ENCODE measurements at regions of chr6 and their contacts with region 1.

Region 1: DNA sequence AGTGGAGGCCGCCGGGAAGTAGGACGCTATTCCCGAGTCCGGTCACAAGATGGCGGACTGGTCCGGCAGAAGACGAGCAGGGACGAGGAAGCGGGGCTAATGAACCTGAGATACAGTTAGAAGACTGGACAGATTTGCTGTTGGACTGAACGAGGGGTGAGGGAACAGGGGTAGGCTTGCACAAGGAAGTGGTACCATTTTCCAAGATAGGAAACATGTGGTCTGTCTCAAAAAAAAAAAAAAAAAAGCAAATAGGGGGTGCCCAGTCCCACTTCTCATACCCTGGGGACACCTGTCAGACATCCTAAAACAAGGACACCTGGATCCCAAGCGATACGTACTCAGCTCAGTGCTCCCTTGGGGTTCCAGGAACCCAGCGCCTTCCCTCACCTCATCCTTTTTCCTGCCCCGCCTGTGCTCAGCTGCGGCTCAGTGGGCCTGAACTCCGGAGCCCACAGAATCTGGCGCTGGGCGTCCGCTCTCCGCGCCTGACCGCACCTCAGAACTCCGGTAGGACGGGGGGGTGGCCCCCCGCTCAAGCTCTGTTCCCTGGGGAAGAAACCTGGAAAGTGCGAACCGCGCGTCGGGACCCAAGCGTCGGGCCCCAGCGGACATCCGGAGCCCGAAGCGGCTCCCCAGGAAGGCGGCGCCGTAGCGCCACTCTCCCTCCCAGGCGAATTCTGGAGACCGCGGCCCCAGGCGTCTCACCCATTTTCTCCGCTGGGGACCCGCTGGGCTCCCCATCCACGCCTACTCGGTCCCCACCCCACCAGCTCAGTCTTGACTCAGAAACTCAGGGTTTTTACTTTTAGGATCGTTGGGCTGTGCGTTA is at the start of gene LY6G5C:
- DNase-seq: peak; percentile 80
- ATAC-seq: peak; percentile 80
- H3K4me3 Mint-ChIP-seq: peak within 1 kb of the TSS; percentile 66
- H3K27ac Mint-ChIP-seq: peak within 1 kb of the TSS; percentile 49
- H3K4me1 Mint-ChIP-seq: peaks cover 15% of the 10 kb centered on the region
- H3K27me3 Mint-ChIP-seq: no peaks in the 10 kb centered on the region
- total RNA-seq, gene LY6G5C: 1.2 to 1.5 TPM

Region 2: GRCh38 chr6:31729515-31729978 is 48.5 kb after region 1 on chr6:
- CTCF ChIA-PET with region 1: no interaction called
- POLR2A ChIA-PET with region 1: no interaction called
- intact Hi-C with region 1: loop called in 1 of 2 experiments (anchors 2 kb)
- DNase-seq: peak; percentile 86
- ATAC-seq: peak; percentile 59
- H3K4me3 Mint-ChIP-seq: peak overlapping the region; percentile 69
- H3K27ac Mint-ChIP-seq: peak overlapping the region; percentile 5
- H3K4me1 Mint-ChIP-seq: peaks cover 65% of the 10 kb centered on the region
- H3K27me3 Mint-ChIP-seq: no peaks in the 10 kb centered on the region

Region 3: GRCh38 chr6:31769684-31770371 is 88.8 kb after region 1 on chr6:
- CTCF ChIA-PET with region 1: interaction called, 5 read pairs
- POLR2A ChIA-PET with region 1: no interaction called
- intact Hi-C with region 1: loop called in 1 of 2 experiments (anchors 1 kb)
- DNase-seq: peak; percentile 91
- ATAC-seq: peak; percentile 88
- H3K4me3 Mint-ChIP-seq: no peak overlapping the region
- H3K27ac Mint-ChIP-seq: peak overlapping the region; percentile 80
- H3K4me1 Mint-ChIP-seq: peaks cover 19% of the 10 kb centered on the region
- H3K27me3 Mint-ChIP-seq: no peaks in the 10 kb centered on the region

Region 4: DNA sequence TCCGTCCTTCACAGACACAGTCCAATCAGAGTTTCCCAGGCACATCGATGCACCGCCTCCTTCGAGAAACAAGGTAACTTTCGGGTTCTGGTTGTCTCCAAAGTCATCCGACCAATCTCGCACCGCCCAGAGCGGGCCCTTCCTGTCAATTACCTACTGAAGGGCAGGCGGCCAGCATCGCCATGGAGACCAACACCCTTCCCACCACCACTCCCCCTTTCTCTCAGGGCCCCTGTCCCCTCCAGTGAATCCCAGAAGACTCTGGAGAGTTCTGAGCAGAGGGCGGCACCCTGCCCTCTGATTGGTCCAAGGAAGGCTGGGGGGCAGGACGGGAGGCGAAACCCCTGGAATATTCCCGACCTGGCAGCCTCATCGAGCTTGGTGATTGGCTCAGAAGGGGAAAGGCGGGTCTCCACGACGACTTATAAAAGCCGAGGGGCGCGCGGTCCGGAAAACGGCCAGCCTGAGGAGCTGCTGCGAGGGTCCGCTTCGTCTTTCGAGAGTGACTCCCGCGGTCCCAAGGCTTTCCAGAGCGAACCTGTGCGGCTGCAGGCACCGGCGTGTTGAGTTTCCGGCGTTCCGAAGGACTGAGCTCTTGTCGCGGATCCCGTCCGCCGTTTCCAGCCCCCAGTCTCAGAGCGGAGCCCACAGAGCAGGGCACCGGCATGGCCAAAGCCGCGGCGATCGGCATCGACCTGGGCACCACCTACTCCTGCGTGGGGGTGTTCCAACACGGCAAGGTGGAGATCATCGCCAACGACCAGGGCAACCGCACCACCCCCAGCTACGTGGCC is 146.4 kb after region 1 on chr6 and contains the start of gene HSPA1B:
- CTCF ChIA-PET with region 1: no interaction called
- POLR2A ChIA-PET with region 1: interaction called, 3 read pairs
- intact Hi-C with region 1: loop called (anchors 1 to 2 kb)
- DNase-seq: peak; percentile 97
- ATAC-seq: peak; percentile 83
- H3K4me3 Mint-ChIP-seq: peak within 1 kb of the TSS; percentile 77
- H3K27ac Mint-ChIP-seq: peak within 1 kb of the TSS; percentile 92
- H3K4me1 Mint-ChIP-seq: peaks cover 43% of the 10 kb centered on the region
- H3K27me3 Mint-ChIP-seq: no peaks in the 10 kb centered on the region
- total RNA-seq, gene HSPA1B: 54.6 to 61.1 TPM

Region 5: DNA sequence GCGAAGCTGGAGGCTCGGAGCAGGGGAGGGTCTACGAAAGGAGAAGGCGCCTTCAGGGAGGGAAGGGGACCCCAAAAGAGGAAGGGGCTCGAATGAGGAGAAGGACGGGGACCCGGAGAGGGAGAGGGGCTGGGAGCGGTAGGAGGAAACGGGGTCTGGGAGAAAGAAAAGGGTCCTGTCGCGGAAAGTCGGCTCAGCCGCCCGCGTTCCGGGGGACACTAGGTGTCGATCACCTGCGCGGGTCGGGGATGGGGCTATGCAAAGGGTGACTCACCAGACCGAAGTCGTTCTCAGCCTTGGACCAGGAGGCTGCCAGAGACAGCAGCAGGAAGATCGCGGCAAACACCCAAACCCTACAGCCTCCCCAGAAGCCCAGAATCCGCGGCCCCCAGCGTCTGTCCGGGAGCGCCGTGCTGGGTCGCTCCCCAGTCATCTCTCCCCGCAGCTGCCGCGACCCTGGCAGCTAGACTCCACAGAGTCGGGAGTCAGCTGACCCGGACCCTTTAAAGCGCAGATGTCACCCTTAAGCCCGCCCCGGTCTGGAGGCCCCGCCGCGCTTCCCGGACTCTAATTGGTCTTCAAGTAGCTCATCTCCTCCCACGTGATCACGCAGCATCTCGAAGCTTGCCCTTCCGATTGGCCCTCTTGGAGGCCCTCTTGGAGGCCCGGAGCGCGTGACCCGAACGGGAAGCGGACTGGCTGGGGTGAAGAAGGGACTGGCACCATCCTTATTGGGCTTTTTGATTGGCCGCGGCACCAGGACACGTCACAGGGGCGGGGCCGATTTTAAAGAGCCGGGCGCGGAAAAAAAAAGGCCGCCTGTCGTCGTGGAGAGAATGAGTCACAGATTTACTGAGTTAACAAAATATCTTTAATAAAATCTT is 181.5 kb after region 1 on chr6 and contains the start of gene NEU1:
- CTCF ChIA-PET with region 1: interaction called, 4 read pairs
- POLR2A ChIA-PET with region 1: no interaction called
- intact Hi-C with region 1: loop called (anchors 1 to 5 kb)
- DNase-seq: peak; percentile 100
- ATAC-seq: peak; percentile 98
- H3K4me3 Mint-ChIP-seq: peak within 1 kb of the TSS; percentile 90
- H3K27ac Mint-ChIP-seq: peak within 1 kb of the TSS; percentile 91
- H3K4me1 Mint-ChIP-seq: peaks cover 27% of the 10 kb centered on the region
- H3K27me3 Mint-ChIP-seq: no peaks in the 10 kb centered on the region
- total RNA-seq, gene NEU1: 11.6 to 11.8 TPM

Region 6: GRCh38 chr6:31958741-31959739 is 278.0 kb after region 1 on chr6 and contains the starts of genes NELFE and SKIC2:
- CTCF ChIA-PET with region 1: no interaction called
- POLR2A ChIA-PET with region 1: no interaction called
- intact Hi-C with region 1: loop called (anchors 5 to 10 kb)
- DNase-seq: peak; percentile 99
- ATAC-seq: peak; percentile 99
- H3K4me3 Mint-ChIP-seq: peak within 1 kb of the TSS; percentile 95
- H3K27ac Mint-ChIP-seq: peak within 1 kb of the TSS; percentile 98
- H3K4me1 Mint-ChIP-seq: peaks cover 34% of the 10 kb centered on the region
- H3K27me3 Mint-ChIP-seq: no peaks in the 10 kb centered on the region
- total RNA-seq, gene NELFE: 74.3 to 95.1 TPM
- total RNA-seq, gene SKIC2: 90.2 to 104 TPM

Measured in activated CD4-positive, alpha-beta T cell treated with anti-CD3 and anti-CD28 coated beads for 36 hours (primary cell).